ENCODE measurements at regions of chr1 and their contacts with region 1.

Region 1: GRCh38 chr1:182939413-182939812 is 13.6 kb downstream of the SHCBP1L start:
- DNase-seq: no peak
- ATAC-seq: no peak

Region 2: GRCh38 chr1:180962178-180962577 is 1977.2 kb before region 1 on chr1:
- intact Hi-C with region 1: loop called (anchors 5 kb)
- DNase-seq: no peak
- ATAC-seq: peak; percentile 77

Region 3: DNA sequence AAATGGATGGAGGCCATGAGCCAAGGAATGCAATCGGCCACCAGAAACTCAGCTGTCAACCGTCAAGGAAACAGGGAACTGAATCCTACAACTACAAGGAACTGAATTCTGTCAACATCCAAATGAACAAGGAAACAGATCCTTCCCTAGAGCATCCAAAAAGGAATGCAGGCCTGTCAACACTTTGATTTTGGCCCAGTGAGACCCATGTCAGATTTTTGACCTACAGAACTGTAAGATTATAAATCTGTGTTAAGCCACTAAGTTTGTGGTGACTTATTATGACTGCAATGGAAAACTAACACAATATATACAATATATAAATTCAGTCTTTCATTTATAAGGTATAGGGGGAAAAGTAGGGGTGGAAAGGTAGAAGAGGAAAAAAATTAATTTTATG is 41.7 kb before region 1 on chr1:
- intact Hi-C with region 1: no loop called
- DNase-seq: no peak
- ATAC-seq: no peak

Region 4: DNA sequence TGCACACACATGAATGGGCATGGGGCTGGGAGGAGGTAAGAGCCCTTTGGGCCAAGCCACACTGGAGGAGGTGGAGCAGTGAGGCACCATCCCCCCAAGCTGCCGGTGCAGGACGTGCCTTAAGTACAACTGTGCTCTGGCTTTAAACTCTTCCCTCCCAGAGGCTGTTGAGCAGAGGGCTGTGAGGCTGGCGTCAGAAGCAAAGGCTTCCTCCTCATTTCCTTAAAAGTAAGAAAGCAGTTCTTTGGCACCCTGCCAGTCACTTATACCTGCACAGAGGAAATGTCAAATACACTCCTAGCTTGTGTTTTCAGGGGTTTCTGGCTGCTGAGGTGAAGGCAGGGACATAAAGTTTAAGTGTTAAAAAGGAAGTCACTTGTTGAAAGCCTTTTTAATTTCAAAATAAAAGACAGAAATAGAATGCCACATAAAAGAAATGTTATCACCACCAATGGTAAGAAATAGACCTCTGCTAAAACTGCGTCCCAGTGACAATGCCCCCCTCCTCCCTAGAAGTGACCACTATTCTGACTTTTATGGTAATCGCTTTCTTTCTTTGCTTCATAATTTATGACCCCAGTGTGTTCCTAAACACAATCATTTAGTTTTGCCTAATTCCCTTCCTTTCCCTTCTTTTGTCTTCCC is 279.7 kb after region 1 on chr1:
- intact Hi-C with region 1: no loop called
- DNase-seq: no peak
- ATAC-seq: peak; percentile 81